ENCODE measurements at regions of chr7 and their contacts with region 1.

Region 1: DNA sequence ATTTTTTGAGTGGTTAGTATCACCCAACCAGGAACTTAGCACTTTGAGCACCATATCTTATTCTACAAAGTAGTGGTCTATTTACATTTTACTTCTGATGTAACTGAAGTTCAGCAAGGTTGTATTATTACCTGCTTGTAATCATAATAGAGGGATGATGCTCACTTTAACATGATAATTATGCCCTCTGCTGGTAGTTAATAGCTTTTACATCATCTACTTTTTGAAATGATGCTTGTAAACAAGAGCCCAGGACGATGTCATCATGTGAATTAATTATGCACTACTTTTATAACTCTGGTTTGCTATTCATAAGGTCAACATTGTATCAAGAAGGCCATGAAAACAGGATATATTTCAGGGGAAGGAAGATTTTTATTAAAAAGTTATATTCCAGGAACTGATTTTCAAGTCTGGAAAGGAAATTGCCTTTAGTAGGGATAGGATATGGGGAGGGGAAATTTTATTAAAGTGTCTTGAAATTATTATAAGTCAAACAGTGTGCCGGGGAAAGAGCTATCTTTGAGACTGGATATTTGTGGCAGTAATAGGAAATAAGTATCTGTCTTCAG is 80.3 kb upstream of the SCIN start:
- DNase-seq: no peak
- ATAC-seq: no peak
- H3K4me3 ChIP-seq: no peak overlapping the region
- H3K27ac ChIP-seq: no peak overlapping the region
- H3K4me1 ChIP-seq: no peaks in the 10 kb centered on the region
- H3K27me3 ChIP-seq: no peaks in the 10 kb centered on the region
- CTCF ChIP-seq: peak; percentile 31 to 62 (median 44)
- POLR2A ChIP-seq: no peak

Region 2: DNA sequence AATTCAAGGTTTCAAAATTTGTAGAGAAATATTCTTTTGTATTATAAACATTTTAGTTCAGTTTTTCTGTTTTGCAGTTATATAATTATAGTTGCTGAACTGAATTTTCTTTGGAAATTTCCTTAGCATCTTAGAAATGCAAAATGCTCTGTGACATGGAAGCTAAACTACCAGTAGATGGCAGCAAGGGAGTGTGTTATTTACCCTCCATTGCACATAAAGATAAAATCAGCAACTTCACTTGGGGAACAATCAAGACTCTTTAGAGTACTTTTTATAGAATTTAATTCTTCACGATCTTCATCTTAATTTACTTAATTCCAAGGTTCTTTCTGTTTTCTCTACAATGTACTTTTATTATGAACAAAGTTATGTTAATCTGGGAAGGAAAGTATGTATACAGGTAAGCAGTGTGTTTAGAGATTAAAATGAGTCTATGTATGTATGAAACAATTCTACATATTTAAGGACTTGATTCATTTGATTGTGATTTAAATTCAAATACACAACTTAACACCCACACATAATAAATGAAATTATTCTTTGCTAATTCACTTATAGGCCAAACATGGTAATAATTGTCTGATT is 1062.4 kb before region 1 on chr7:
- intact Hi-C with region 1: loop called in 7 of 10 experiments (anchors 5 to 10 kb)
- DNase-seq: no peak
- ATAC-seq: no peak
- H3K4me3 ChIP-seq: no peak overlapping the region
- H3K27ac ChIP-seq: no peak overlapping the region
- H3K4me1 ChIP-seq: peaks cover 0 to 10% (median 0%) of the 10 kb centered on the region in 12 donors
- H3K27me3 ChIP-seq: no peaks in the 10 kb centered on the region
- CTCF ChIP-seq: peak; percentile 55 to 89 (median 74)
- POLR2A ChIP-seq: no peak

Region 3: GRCh38 chr7:11831736-11832495 is 658.3 kb before region 1 on chr7 and contains the start of gene THSD7A:
- intact Hi-C with region 1: loop called in 6 of 10 experiments (anchors 5 to 10 kb)
- DNase-seq: peak; percentile 19 to 74 (median 32)
- ATAC-seq: peak; percentile 73 to 94 (median 86)
- H3K4me3 ChIP-seq: peak within 1 kb of the TSS; percentile 32 to 82 (median 58)
- H3K27ac ChIP-seq: peak within 1 kb of the TSS in 11 of 12 donors; percentile 34 to 77 (median 65)
- H3K4me1 ChIP-seq: peaks cover 0 to 19% (median 7%) of the 10 kb centered on the region in 12 donors
- H3K27me3 ChIP-seq: peaks cover 0 to 13% (median 0%) of the 10 kb centered on the region in 9 donors
- CTCF ChIP-seq: peak in 2 of 12 donors; percentile 18 to 28
- POLR2A ChIP-seq: no peak
- total RNA-seq, gene THSD7A: 0.67 to 5.2 (median 1.6) TPM

Region 4: DNA sequence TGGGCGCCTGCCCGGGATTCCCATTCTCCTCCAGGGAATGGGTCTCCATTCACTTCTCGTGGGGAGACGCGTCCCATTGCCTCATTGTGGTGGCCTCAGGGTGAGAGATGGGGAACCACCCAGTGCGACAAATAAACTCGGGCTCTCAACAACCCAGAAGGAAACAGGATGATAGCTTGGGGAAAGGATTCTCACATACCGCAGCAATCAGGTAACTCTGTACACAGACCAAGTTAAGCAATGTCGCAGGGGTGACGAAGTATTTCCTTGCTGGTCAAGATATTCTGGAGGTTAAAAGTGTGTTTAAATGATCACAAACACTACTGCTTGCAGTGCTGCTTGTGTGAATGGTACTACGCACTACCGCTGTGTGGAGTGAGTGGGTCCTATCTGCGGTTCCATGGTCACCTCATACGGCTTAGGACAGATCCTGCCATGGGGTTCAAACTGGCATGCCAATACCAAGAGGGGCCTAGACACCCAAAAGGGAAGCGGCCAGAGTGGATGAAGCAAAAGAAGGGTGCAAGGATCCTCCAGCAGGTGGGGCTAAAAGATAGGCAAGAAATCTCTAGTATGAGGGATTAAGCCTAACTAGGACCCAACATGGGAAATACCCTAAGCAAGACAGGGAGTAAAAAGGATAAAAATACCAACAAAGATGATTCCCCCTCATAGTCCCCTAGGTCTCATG is 422.9 kb before region 1 on chr7:
- intact Hi-C with region 1: loop called in 6 of 10 experiments (anchors 5 to 10 kb)
- DNase-seq: peak in 1 of 5 donors; percentile 30
- ATAC-seq: peak in 3 of 4 donors; percentile 47 to 54 (median 48)
- H3K4me3 ChIP-seq: no peak overlapping the region
- H3K27ac ChIP-seq: no peak overlapping the region
- H3K4me1 ChIP-seq: no peaks in the 10 kb centered on the region
- H3K27me3 ChIP-seq: no peaks in the 10 kb centered on the region
- CTCF ChIP-seq: peak; percentile 43 to 67 (median 54)
- POLR2A ChIP-seq: no peak

Region 5: DNA sequence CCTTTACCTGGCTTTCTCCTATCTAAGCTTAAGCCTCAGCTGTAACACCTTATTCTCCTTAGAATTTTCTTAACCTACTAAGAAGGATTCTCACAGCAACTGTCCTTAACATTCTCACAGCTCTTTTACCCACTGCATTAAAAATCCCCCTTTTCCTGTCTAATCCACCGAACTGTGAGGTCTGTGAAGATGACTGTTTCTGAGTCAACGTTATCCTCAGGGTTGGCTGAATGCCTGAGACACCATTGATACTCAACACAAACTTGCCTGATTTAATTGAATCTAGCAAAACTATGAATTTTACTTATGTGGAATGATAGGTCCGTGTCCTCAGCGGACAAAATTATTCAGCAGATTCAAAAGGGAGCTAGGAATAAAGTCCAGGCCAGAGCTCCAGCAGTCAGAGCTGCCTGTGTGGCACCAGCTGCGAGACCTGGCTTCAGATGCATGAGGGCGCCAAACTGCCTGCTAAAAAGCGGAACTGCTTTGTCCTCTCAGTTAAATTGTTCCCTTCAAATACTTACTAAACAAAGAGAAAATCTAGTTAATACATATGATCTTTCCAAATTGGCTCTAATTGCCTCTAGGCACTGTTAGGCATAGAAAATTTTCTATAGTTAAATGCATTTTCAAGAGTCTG is 53.2 kb before region 1 on chr7:
- intact Hi-C with region 1: loop called in 5 of 10 experiments (anchors 5 to 10 kb)
- DNase-seq: no peak
- ATAC-seq: no peak
- H3K4me3 ChIP-seq: no peak overlapping the region
- H3K27ac ChIP-seq: no peak overlapping the region
- H3K4me1 ChIP-seq: no peaks in the 10 kb centered on the region
- H3K27me3 ChIP-seq: peaks cover 0 to 3% (median 0%) of the 10 kb centered on the region in 9 donors
- CTCF ChIP-seq: no peak
- POLR2A ChIP-seq: no peak

Region 6: DNA sequence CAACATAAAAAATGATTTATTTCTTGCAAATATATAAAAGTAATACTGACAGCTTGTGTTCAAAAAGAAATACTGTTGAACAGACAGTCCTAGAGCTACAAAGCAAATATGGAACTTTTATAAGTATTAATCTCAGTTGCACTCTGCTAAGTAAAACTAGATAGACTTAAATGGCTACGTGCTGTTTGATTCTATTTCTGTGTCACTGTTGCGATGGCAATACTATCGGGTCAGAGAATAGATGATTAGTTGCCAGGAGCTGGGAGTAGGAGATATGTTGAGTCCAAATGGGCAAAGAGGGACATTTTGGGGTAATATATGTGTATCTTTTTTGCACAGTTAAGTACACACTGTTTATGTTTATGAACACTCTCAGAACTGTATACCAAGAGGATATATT is 45.4 kb before region 1 on chr7:
- intact Hi-C with region 1: loop called in 5 of 10 experiments (anchors 5 to 10 kb)
- DNase-seq: no peak
- ATAC-seq: peak in 1 of 4 donors; percentile 42
- H3K4me3 ChIP-seq: no peak overlapping the region
- H3K27ac ChIP-seq: no peak overlapping the region
- H3K4me1 ChIP-seq: no peaks in the 10 kb centered on the region
- H3K27me3 ChIP-seq: no peaks in the 10 kb centered on the region
- CTCF ChIP-seq: no peak
- POLR2A ChIP-seq: no peak

Region 7: GRCh38 chr7:12458520-12459131 is 31.6 kb before region 1 on chr7:
- intact Hi-C with region 1: loop called in 3 of 10 experiments (anchors 5 kb)
- DNase-seq: no peak
- ATAC-seq: no peak
- H3K4me3 ChIP-seq: no peak overlapping the region
- H3K27ac ChIP-seq: no peak overlapping the region
- H3K4me1 ChIP-seq: no peaks in the 10 kb centered on the region
- H3K27me3 ChIP-seq: peaks cover 0 to 11% (median 0%) of the 10 kb centered on the region in 9 donors
- CTCF ChIP-seq: peak; percentile 39 to 68 (median 50)
- POLR2A ChIP-seq: no peak

Region 8: GRCh38 chr7:12607134-12607533 is 116.9 kb after region 1 on chr7:
- intact Hi-C with region 1: no loop called
- DNase-seq: no peak
- ATAC-seq: no peak
- H3K4me3 ChIP-seq: no peak overlapping the region
- H3K27ac ChIP-seq: no peak overlapping the region
- H3K4me1 ChIP-seq: no peaks in the 10 kb centered on the region
- H3K27me3 ChIP-seq: no peaks in the 10 kb centered on the region
- CTCF ChIP-seq: no peak
- POLR2A ChIP-seq: no peak

Region 9: GRCh38 chr7:13165854-13166253 is 675.7 kb after region 1 on chr7:
- intact Hi-C with region 1: no loop called
- DNase-seq: no peak
- ATAC-seq: no peak
- H3K4me3 ChIP-seq: no peak overlapping the region
- H3K27ac ChIP-seq: no peak overlapping the region
- H3K4me1 ChIP-seq: no peaks in the 10 kb centered on the region
- H3K27me3 ChIP-seq: no peaks in the 10 kb centered on the region
- CTCF ChIP-seq: no peak
- POLR2A ChIP-seq: no peak

Measured in heart left ventricle (tissue), 16 donors.